ENCODE measurements at regions of chr9 and their contacts with region 1.

Region 1: GRCh38 chr9:130235897-130236668 is 29.5 kb upstream of the HMCN2 start:
- DNase-seq: peak; percentile 50 to 90 (median 74)

Region 2: DNA sequence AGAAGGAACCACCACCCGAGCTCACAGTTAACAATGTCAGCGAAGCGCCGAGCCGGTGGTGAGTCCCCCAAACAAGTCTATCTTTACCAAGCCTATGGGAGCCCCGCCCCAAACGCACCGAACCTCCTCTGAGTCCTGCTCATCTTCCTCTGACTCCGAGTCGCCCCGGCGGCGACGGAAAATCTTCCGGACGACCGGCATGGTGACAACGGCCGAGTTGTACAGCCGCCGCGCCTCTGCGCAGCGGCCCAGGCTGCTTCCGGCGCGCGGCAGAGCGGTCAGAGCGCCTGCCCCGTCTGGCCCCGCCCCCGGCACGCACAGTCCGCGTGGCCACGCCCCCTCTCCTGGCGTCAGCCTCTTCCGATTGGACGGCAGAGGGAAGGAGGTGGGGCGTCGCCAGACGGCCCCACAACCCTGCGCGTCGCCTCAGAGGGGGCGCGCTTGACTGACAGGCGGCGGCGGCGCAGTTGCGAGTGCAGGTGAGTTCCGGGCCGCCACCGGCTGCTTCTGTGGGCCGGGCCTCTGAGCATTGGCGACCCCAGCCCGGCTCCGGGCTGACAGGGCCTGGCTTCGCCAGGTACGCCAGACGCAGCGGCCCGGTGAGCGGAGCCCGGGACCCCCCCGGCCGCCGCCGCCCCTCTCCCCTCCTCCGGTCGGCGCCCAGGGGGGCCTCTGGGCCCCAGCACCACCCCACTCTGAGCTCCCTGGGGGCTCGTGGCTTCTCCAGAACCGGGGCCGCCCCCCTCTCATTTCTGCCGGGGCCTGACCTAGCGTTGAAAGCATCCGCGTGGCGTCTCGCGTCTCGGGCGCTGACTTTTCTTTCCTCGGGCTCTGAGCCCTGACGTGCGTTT is 400.8 kb before region 1 on chr9 and contains the starts of genes C9orf78 and USP20:
- intact Hi-C with region 1: loop called (anchors 10 kb)
- DNase-seq: peak; percentile 83 to 98 (median 96)

Region 3: GRCh38 chr9:129884220-129885017 is 351.7 kb before region 1 on chr9:
- intact Hi-C with region 1: loop called (anchors 10 kb)
- DNase-seq: peak; percentile 74 to 95 (median 88)

Region 4: DNA sequence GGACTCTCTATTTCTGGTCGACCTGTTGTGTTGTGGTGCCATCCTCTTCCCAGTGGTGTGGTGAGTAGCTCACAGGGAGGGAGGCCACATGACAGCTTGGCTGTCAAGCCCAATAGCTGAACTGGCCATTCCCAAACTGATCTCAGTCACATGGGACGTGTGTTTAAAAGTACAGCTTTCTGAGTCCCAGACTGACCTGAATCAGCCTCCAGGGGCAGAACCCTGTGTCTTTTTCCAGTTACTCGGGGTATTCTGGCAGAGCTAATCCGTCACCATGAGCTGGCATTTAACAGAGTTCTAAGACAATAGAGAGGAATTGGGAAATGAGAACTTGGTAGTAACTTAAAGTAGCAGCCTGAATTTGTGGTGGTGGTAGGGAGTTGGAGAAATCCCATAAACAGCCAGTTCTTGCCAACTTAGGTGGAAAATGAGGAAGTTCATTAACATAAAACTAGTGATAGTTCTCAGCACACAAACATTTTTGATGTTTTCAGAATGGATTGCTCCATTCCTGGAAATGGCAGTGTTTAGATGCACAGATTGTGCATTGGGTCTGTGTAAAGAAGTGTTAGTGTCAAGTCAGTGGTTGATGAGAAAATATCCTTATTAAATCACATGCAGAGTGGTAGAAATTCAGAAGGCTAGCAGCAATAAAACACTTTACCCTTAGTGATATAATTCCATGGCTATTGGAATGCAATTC is 131.4 kb before region 1 on chr9:
- intact Hi-C with region 1: loop called (anchors 2 kb)
- DNase-seq: peak in 4 of 42 donors; percentile 12 to 65 (median 34)

Measured in head of caudate nucleus (tissue), 42 donors.